ENCODE measurements at regions of chr7 and their contacts with region 1.

Region 1: DNA sequence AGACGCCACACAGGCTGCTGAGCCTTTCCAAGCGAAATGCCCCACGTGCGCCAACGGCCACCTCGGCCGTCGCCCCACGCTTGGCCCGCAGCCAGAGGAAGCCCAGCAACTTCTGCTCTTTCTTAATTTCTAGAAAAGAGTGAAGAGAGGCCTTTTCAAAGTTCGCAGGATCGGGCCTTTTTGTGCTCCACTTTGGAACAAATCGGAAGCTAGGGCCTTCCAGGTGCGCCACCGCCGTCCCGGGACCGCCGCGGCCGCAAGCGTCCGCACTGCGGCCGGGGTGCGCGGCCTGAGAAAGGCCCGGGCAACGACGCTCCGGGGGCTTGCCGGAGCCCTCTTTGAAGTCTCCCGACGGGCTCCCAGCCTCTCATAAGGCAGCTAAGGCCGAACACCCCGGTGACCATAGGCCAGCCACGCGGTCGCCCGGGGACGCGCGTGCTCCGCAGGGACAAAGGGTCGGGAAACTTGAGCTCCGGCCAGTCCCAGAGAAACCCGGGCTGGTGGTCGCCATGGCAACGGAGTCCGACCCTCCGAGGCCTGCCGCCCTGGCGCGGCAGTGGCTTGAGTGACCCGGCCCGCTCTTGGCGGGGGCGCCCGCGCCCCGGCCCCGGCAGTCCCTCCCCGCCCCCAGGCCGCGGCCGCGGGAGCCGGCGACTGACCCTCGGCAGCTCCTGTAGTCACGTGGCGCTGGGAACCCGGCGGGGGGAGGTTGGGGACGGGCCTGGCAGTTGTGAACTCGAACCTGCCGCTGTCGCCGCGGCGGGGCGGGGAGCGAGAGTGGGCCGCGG is at the start of gene REPIN1:
- DNase-seq: no peak
- ATAC-seq: peak; percentile 57
- H3K4me3 ChIP-seq: peak within 1 kb of the TSS; percentile 96
- H3K27ac ChIP-seq: peak within 1 kb of the TSS; percentile 97
- H3K4me1 ChIP-seq: peaks cover 30% of the 10 kb centered on the region
- H3K27me3 ChIP-seq: no peaks in the 10 kb centered on the region
- CTCF ChIP-seq: no peak
- EP300 ChIP-seq: peak in 1 of 2 experiments; percentile 59; a peak in 1 of 4 replicates
- POLR2A ChIP-seq: peak; percentile 93
- RAD21 ChIP-seq: no peak
- polyA plus RNA-seq, gene REPIN1: 5.1 to 12.6 TPM

Region 2: GRCh38 chr7:150322833-150323681 is 45.2 kb before region 1 on chr7 and contains the starts of genes ACTR3C and LRRC61:
- CTCF ChIA-PET with region 1: interaction called, 3 read pairs
- POLR2A ChIA-PET with region 1: interaction called, 8 read pairs
- RAD21 ChIA-PET with region 1: no interaction called
- SMC1A ChIA-PET with region 1: interaction called, 9 read pairs
- in situ Hi-C with region 1: no loop called
- intact Hi-C with region 1: loop called (anchors 2 kb)
- DNase-seq: no peak
- ATAC-seq: peak; percentile 82
- H3K4me3 ChIP-seq: peak within 1 kb of the TSS; percentile 78
- H3K27ac ChIP-seq: peak within 1 kb of the TSS; percentile 99
- H3K4me1 ChIP-seq: peaks cover 13% of the 10 kb centered on the region; the same call in 1 of the 2 replicates
- H3K27me3 ChIP-seq: no peaks in the 10 kb centered on the region
- CTCF ChIP-seq: peak; percentile 19 to 43 (median 26); a peak in 3 of 6 replicates
- EP300 ChIP-seq: no peak
- POLR2A ChIP-seq: peak; percentile 92
- RAD21 ChIP-seq: peak; percentile 15; the same call in 1 of the 2 replicates
- polyA plus RNA-seq, gene ACTR3C: 2.0 to 2.7 TPM
- polyA plus RNA-seq, gene LRRC61: 1.4 to 2.5 TPM

Region 3: DNA sequence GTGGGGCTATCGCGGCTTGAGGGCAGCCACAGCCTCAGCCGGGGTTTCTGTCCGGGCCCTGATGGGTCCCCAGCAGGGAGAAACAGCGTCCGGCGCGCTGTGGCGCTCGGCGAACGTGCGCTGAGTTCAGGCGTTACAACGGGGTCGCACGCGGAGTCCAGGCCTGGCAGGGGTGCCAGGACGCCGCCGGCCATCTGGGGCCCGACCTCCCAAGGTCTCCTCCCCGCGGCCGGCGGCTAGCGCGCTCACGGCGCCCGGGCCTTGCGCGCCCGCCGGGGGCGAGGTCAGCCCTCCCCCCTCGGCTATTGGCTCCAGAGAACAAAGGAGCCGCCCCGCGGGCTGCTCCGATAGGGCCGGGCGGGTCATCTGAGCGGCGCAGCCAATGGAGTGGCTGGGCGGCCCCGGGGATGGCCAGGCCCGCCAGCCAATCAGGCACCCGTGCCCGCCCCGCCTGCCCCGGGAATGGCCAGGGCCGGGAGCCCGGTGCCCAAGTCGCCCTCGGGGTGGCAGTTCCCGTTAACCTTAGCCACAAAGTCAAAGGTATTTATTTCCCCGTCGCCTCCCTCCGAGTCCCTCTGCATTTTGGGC is 10.7 kb after region 1 on chr7 and contains the start of gene ZNF775:
- CTCF ChIA-PET with region 1: interaction called, 11 read pairs
- POLR2A ChIA-PET with region 1: interaction called, 36 read pairs
- RAD21 ChIA-PET with region 1: interaction called, 45 read pairs
- SMC1A ChIA-PET with region 1: interaction called, 41 read pairs
- in situ Hi-C with region 1: no loop called
- intact Hi-C with region 1: loop called (anchors 1 kb)
- DNase-seq: no peak
- ATAC-seq: peak; percentile 87
- H3K4me3 ChIP-seq: peak within 1 kb of the TSS; percentile 99
- H3K27ac ChIP-seq: peak within 1 kb of the TSS; percentile 97
- H3K4me1 ChIP-seq: peaks cover 75% of the 10 kb centered on the region
- H3K27me3 ChIP-seq: no peaks in the 10 kb centered on the region
- CTCF ChIP-seq: no peak
- EP300 ChIP-seq: no peak
- POLR2A ChIP-seq: peak; percentile 93
- RAD21 ChIP-seq: no peak
- polyA plus RNA-seq, gene ZNF775: 0.05 to 0.46 TPM

Region 4: GRCh38 chr7:150404805-150405583 is 36.7 kb after region 1 on chr7:
- CTCF ChIA-PET with region 1: interaction called, 70 read pairs
- POLR2A ChIA-PET with region 1: interaction called, 89 read pairs
- RAD21 ChIA-PET with region 1: interaction called, 33 read pairs
- SMC1A ChIA-PET with region 1: interaction called, 21 read pairs
- in situ Hi-C with region 1: loop called (anchors 5 kb)
- intact Hi-C with region 1: loop called (anchors 1 kb)
- DNase-seq: no peak
- ATAC-seq: peak; percentile 62
- H3K4me3 ChIP-seq: peak overlapping the region; percentile 91
- H3K27ac ChIP-seq: peak overlapping the region; percentile 89
- H3K4me1 ChIP-seq: peaks cover 58% of the 10 kb centered on the region
- H3K27me3 ChIP-seq: no peaks in the 10 kb centered on the region
- CTCF ChIP-seq: peak; percentile 13 to 39 (median 19); a peak in 4 of 6 replicates
- EP300 ChIP-seq: peak in 1 of 2 experiments; percentile 53; a peak in 1 of 4 replicates
- POLR2A ChIP-seq: peak; percentile 94
- RAD21 ChIP-seq: no peak

Region 5: GRCh38 chr7:150410680-150411346 is 42.5 kb after region 1 on chr7:
- CTCF ChIA-PET with region 1: interaction called, 70 read pairs
- POLR2A ChIA-PET with region 1: interaction called, 89 read pairs
- RAD21 ChIA-PET with region 1: interaction called, 33 read pairs
- SMC1A ChIA-PET with region 1: interaction called, 21 read pairs
- in situ Hi-C with region 1: loop called (anchors 5 kb)
- intact Hi-C with region 1: no loop called
- DNase-seq: no peak
- ATAC-seq: no peak
- H3K4me3 ChIP-seq: no peak overlapping the region
- H3K27ac ChIP-seq: no peak overlapping the region
- H3K4me1 ChIP-seq: peaks cover 25% of the 10 kb centered on the region
- H3K27me3 ChIP-seq: no peaks in the 10 kb centered on the region
- CTCF ChIP-seq: no peak
- EP300 ChIP-seq: no peak
- POLR2A ChIP-seq: no peak
- RAD21 ChIP-seq: no peak

Region 6: DNA sequence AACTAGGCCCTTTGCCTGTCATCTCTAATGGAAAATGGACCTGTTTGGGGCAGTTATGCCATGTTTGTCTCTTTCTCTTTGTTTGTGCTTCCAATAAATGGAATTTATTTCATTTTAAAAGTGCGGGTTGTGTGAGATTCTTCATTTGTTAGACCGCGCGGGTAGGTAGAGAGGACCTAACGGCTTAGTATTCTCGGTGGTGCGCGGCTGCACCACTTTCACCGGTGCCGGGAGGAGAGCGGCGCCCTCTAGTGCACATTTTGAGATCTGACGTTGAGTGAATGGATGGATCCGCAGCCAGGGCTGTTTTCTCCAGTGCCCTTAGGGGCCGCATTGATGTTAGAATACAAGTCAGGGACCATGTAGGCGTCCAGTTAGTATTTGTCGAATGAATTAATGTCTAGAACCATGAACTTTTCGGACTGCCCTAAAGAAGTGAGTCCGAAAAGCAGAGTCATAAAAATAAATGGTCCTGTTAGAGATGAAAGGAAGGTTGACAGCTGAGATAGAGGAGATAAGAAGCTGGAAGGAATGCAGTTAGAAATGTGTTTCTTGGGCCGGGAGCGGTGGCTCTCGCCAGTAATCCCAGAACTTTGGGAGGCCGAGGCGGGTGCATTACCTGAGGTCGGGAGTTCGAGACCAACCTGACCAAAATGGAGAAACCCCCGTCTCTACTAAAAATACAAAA is 52.8 kb after region 1 on chr7:
- CTCF ChIA-PET with region 1: interaction called, 13 read pairs
- POLR2A ChIA-PET with region 1: no interaction called
- RAD21 ChIA-PET with region 1: interaction called, 15 read pairs
- SMC1A ChIA-PET with region 1: no interaction called
- in situ Hi-C with region 1: no loop called
- intact Hi-C with region 1: no loop called
- DNase-seq: no peak
- ATAC-seq: peak; percentile 100
- H3K4me3 ChIP-seq: no peak overlapping the region
- H3K27ac ChIP-seq: no peak overlapping the region
- H3K4me1 ChIP-seq: peaks cover 2% of the 10 kb centered on the region; the same call in 1 of the 2 replicates
- H3K27me3 ChIP-seq: no peaks in the 10 kb centered on the region
- CTCF ChIP-seq: peak; percentile 86 to 95 (median 88); a peak in 5 of 6 replicates
- EP300 ChIP-seq: no peak
- POLR2A ChIP-seq: no peak
- RAD21 ChIP-seq: peak; percentile 94

Region 7: GRCh38 chr7:150435390-150436073 is 67.2 kb after region 1 on chr7:
- CTCF ChIA-PET with region 1: interaction called, 6 read pairs
- POLR2A ChIA-PET with region 1: interaction called, 19 read pairs
- RAD21 ChIA-PET with region 1: interaction called, 13 read pairs
- SMC1A ChIA-PET with region 1: interaction called, 4 read pairs
- in situ Hi-C with region 1: no loop called
- intact Hi-C with region 1: no loop called
- DNase-seq: peak; percentile 97
- ATAC-seq: peak; percentile 90
- H3K4me3 ChIP-seq: peak overlapping the region; percentile 74
- H3K27ac ChIP-seq: peak overlapping the region; percentile 100
- H3K4me1 ChIP-seq: peaks cover 29% of the 10 kb centered on the region
- H3K27me3 ChIP-seq: no peaks in the 10 kb centered on the region
- CTCF ChIP-seq: no peak
- EP300 ChIP-seq: peak; percentile 82 to 89
- POLR2A ChIP-seq: peak; percentile 64
- RAD21 ChIP-seq: no peak

Region 8: GRCh38 chr7:150586785-150587152 is 218.5 kb after region 1 on chr7:
- CTCF ChIA-PET with region 1: no interaction called
- POLR2A ChIA-PET with region 1: no interaction called
- RAD21 ChIA-PET with region 1: no interaction called
- SMC1A ChIA-PET with region 1: no interaction called
- in situ Hi-C with region 1: no loop called
- intact Hi-C with region 1: no loop called
- DNase-seq: no peak
- ATAC-seq: no peak
- H3K4me3 ChIP-seq: no peak overlapping the region
- H3K27ac ChIP-seq: no peak overlapping the region
- H3K4me1 ChIP-seq: peaks cover 5% of the 10 kb centered on the region; the same call in 1 of the 2 replicates
- H3K27me3 ChIP-seq: no peaks in the 10 kb centered on the region
- CTCF ChIP-seq: no peak
- EP300 ChIP-seq: no peak
- POLR2A ChIP-seq: no peak
- RAD21 ChIP-seq: no peak

Measured in GM12878 (cell line).